Activated CD4-positive, alpha-beta memory T cell treated with anti-CD3 and anti-CD28 coated beads, Interleukin-2, amount 10 ng/mL, durations not matched to agents 7 days and 5 days (primary cell): ENCODE measurements at regions of chr19 and their contacts with region 1.

Region 1: GRCh38 chr19:14059093-14059480 is 2.8 kb downstream of the PALM3 start:
- DNase-seq: peak; percentile 53
- H3K4me3 Mint-ChIP-seq: no peak overlapping the region
- H3K27ac Mint-ChIP-seq: no peak overlapping the region
- H3K4me1 Mint-ChIP-seq: peaks cover 14% of the 10 kb centered on the region
- H3K27me3 Mint-ChIP-seq: peaks cover 34% of the 10 kb centered on the region

Region 2: DNA sequence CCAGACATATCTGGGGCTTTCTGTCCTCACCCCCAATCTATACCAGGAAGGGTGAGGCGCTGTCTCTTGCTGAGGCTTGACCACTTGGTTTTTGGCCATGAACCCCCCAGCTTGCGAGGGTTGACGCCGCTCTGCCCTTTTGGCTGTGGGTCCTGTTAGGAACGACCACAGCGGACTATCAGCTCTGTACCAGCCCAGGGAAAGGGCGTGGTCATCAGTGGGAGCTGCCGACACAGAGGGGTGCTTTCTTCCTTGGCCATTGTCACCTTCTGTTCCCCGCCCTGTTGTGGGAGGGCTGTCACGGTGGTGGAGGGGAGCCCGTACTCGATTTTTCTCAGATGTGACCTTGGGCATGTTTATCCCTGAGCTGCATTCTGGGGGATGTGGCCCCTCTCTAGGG is 101.0 kb before region 1 on chr19:
- CTCF ChIA-PET with region 1: no interaction called
- POLR2A ChIA-PET with region 1: no interaction called
- DNase-seq: no peak
- H3K4me3 Mint-ChIP-seq: no peak overlapping the region
- H3K27ac Mint-ChIP-seq: no peak overlapping the region
- H3K4me1 Mint-ChIP-seq: peaks cover 12% of the 10 kb centered on the region
- H3K27me3 Mint-ChIP-seq: no peaks in the 10 kb centered on the region

Region 3: DNA sequence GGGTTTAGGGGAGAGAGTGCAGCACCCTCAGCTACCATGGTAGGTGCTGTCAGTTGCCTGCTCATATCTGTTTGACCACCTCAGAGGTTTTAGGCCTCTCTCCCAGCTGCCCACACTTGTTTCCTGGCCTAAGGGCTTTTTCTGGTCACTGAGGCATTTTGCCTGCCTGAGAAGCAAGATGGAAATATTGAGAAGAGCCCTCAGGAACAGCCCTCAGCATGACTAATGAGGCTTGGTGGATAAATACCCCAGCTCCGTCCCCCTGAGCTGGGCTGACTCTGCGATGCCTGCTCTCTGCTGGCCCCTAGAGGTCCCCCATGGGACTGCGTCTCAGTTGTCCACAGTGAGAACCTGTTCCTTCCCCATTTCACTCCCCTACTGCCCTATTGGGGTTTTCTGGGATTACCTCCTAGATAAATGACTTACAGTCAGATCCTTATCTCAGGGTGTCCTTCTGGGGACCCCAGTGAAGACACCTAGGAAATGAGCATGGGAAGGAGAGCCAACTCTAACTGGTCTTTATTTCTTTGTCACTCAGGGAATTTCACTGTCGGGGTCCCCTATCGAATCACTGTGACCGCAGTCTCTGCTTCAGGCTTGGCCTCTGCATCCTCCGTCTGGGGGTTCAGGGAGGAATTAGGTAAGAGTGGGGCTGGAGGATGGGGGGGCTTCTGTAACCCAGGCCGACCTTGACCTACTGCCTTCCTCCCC is 10.5 kb before region 1 on chr19:
- CTCF ChIA-PET with region 1: interaction called, 37 read pairs
- POLR2A ChIA-PET with region 1: interaction called, 3 read pairs
- DNase-seq: peak; percentile 75
- H3K4me3 Mint-ChIP-seq: no peak overlapping the region
- H3K27ac Mint-ChIP-seq: no peak overlapping the region
- H3K4me1 Mint-ChIP-seq: peaks cover 2% of the 10 kb centered on the region
- H3K27me3 Mint-ChIP-seq: no peaks in the 10 kb centered on the region

Region 4: GRCh38 chr19:14073261-14073924 is 14.3 kb after region 1 on chr19:
- CTCF ChIA-PET with region 1: interaction called, 86 read pairs
- POLR2A ChIA-PET with region 1: interaction called, 3 read pairs
- DNase-seq: peak; percentile 78
- H3K4me3 Mint-ChIP-seq: peak overlapping the region; percentile 81
- H3K27ac Mint-ChIP-seq: peak overlapping the region; percentile 73
- H3K4me1 Mint-ChIP-seq: peaks cover 26% of the 10 kb centered on the region
- H3K27me3 Mint-ChIP-seq: peaks cover 2% of the 10 kb centered on the region

Region 5: DNA sequence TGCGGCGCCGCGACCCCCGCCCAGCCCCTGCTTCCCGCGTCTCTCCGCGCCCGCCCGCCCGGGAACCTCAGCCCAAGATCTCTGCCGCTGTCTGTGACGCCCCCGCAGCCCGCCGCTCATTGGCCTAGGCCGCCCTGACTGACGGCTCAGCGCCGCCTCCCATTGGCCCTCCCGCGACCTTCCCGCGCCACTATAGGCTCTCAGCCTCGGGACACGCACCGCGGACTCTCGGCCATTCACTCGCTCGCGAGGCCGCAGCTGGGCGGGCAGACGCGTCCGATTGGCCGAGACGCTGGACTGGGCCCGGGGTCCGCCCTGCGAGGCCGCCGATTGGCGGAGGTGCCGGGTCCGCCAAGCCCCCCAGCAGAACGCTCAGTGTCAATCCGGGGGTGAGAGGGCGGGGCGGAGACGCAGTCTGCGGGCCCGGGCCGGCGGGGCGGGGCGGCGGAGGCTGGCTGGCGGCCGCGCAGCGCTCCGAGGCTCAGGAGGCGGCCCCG is 58.6 kb after region 1 on chr19 and contains the start of gene PRKACA:
- CTCF ChIA-PET with region 1: interaction called, 12 read pairs
- POLR2A ChIA-PET with region 1: no interaction called
- DNase-seq: peak; percentile 99
- H3K4me3 Mint-ChIP-seq: peak within 1 kb of the TSS; percentile 90
- H3K27ac Mint-ChIP-seq: peak within 1 kb of the TSS; percentile 65
- H3K4me1 Mint-ChIP-seq: peaks cover 46% of the 10 kb centered on the region
- H3K27me3 Mint-ChIP-seq: no peaks in the 10 kb centered on the region
- total RNA-seq, gene PRKACA: 48.1 to 49.8 TPM